Endothelial cell of umbilical vein (primary cell): ENCODE measurements at regions of chr3 and their contacts with region 1.

Region 1: GRCh38 chr3:58008140-58009025 is at the start of gene FLNB:
- DNase-seq: peak; percentile 77
- H3K4me3 ChIP-seq: peak within 1 kb of the TSS; percentile 71 to 93 (median 78)
- H3K27ac ChIP-seq: peak within 1 kb of the TSS; percentile 38
- H3K4me1 ChIP-seq: peaks cover 31% of the 10 kb centered on the region
- H3K27me3 ChIP-seq: no peaks in the 10 kb centered on the region
- CTCF ChIP-seq: peak; percentile 54 to 81
- POLR2A ChIP-seq: peak; percentile 98
- total RNA-seq, gene FLNB: 595 and 670 TPM in 2 replicates

Region 2: DNA sequence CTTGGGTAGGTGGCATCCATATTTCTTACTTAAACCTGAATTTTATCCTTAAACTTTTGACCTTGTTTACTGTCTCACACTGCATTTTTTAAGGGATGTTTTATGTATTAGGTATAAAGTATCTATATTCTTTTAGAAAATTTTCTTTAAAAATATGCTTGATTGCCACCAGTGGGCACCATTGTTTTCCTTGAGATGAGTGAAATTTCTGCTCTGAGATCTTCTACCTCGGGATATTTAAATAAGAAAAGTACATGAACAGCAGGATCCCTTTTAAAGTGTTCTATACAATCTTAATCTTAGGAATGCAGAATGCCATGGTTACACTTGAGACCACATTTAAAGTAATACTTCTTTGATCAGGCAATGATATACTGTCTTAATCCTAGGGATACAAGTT is 143.5 kb before region 1 on chr3:
- CTCF ChIA-PET with region 1: no interaction called
- POLR2A ChIA-PET with region 1: no interaction called
- dilution Hi-C with region 1: no loop called
- intact Hi-C with region 1: loop called (anchors 5 kb)
- DNase-seq: peak; percentile 47
- H3K4me3 ChIP-seq: no peak overlapping the region
- H3K27ac ChIP-seq: no peak overlapping the region
- H3K4me1 ChIP-seq: no peaks in the 10 kb centered on the region
- H3K27me3 ChIP-seq: no peaks in the 10 kb centered on the region
- CTCF ChIP-seq: peak; percentile 16 to 22
- POLR2A ChIP-seq: no peak

Region 3: DNA sequence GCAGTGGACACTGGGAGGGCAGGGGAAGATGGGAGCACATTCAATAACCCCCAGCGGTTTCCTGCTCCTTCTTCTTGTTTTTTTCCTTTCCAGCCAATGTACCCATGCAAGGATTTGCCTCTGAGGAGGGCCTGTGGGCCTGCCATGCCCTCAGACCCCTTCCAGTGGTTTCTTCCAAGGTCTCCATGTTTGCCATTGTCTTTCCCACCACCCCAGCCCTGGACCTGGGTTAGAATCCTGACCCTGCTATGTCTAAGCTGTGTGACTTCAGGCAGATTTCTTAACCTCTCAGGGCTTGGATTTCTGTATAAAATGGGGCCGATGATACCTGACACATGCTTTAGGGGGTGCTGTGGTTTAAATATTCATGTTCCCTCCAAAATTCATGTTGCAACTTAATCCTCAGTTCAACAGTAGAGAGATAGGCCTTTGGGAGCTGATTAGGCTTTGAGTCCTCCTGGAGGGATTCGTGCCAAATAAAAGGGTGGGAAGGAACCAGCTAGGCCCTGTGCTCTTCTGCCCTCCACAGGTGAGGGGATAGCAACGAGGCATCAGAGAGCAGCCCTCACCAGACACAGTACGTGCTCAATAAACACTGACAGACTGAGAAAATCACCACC is 46.4 kb before region 1 on chr3:
- CTCF ChIA-PET with region 1: interaction called, 21 read pairs
- POLR2A ChIA-PET with region 1: no interaction called
- dilution Hi-C with region 1: no loop called
- intact Hi-C with region 1: no loop called
- DNase-seq: peak; percentile 58
- H3K4me3 ChIP-seq: no peak overlapping the region
- H3K27ac ChIP-seq: no peak overlapping the region
- H3K4me1 ChIP-seq: peaks cover 17% of the 10 kb centered on the region
- H3K27me3 ChIP-seq: no peaks in the 10 kb centered on the region
- CTCF ChIP-seq: peak; percentile 30 to 65
- POLR2A ChIP-seq: no peak

Region 4: GRCh38 chr3:58034738-58035523 is 26.5 kb after region 1 on chr3:
- CTCF ChIA-PET with region 1: no interaction called
- POLR2A ChIA-PET with region 1: no interaction called
- dilution Hi-C with region 1: no loop called
- intact Hi-C with region 1: no loop called
- DNase-seq: no peak
- H3K4me3 ChIP-seq: no peak overlapping the region
- H3K27ac ChIP-seq: no peak overlapping the region
- H3K4me1 ChIP-seq: peaks cover 13% of the 10 kb centered on the region
- H3K27me3 ChIP-seq: no peaks in the 10 kb centered on the region
- CTCF ChIP-seq: no peak
- POLR2A ChIP-seq: no peak

Region 5: DNA sequence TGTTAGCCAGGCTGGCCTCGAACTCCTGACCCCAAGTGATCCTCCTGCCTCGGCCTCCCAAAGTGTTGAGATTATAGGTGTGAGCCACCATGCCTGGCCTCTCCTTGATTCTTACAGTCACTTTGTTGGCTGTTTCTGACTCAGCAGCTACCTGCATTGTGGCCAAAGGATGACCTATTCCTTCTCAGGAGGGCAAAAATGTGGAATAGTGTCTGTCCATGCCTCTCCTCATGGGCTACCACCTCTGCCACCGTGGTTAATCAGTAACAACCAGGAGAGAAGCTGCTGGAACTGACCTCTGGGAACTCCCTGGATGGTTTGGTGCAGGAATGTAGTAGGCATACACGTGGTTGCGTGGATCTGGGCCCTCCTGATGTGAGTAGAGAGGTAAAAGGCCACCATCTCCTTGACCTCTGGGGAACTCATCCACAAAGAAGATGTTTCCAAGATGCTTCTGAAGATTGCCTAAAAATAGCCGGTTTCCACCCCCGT is 63.1 kb after region 1 on chr3:
- CTCF ChIA-PET with region 1: no interaction called
- POLR2A ChIA-PET with region 1: no interaction called
- dilution Hi-C with region 1: no loop called
- intact Hi-C with region 1: no loop called
- DNase-seq: no peak
- H3K4me3 ChIP-seq: no peak overlapping the region
- H3K27ac ChIP-seq: no peak overlapping the region
- H3K4me1 ChIP-seq: peaks cover 31% of the 10 kb centered on the region
- H3K27me3 ChIP-seq: no peaks in the 10 kb centered on the region
- CTCF ChIP-seq: no peak
- POLR2A ChIP-seq: no peak

Region 6: GRCh38 chr3:58082047-58082446 is 73.7 kb after region 1 on chr3:
- CTCF ChIA-PET with region 1: interaction called, 13 read pairs
- POLR2A ChIA-PET with region 1: interaction called, 8 read pairs
- dilution Hi-C with region 1: no loop called
- intact Hi-C with region 1: loop called (anchors 1 kb)
- DNase-seq: peak; percentile 99
- H3K4me3 ChIP-seq: no peak overlapping the region
- H3K27ac ChIP-seq: peak overlapping the region; percentile 93
- H3K4me1 ChIP-seq: peaks cover 62% of the 10 kb centered on the region
- H3K27me3 ChIP-seq: no peaks in the 10 kb centered on the region
- CTCF ChIP-seq: no peak
- POLR2A ChIP-seq: peak; percentile 47

Region 7: DNA sequence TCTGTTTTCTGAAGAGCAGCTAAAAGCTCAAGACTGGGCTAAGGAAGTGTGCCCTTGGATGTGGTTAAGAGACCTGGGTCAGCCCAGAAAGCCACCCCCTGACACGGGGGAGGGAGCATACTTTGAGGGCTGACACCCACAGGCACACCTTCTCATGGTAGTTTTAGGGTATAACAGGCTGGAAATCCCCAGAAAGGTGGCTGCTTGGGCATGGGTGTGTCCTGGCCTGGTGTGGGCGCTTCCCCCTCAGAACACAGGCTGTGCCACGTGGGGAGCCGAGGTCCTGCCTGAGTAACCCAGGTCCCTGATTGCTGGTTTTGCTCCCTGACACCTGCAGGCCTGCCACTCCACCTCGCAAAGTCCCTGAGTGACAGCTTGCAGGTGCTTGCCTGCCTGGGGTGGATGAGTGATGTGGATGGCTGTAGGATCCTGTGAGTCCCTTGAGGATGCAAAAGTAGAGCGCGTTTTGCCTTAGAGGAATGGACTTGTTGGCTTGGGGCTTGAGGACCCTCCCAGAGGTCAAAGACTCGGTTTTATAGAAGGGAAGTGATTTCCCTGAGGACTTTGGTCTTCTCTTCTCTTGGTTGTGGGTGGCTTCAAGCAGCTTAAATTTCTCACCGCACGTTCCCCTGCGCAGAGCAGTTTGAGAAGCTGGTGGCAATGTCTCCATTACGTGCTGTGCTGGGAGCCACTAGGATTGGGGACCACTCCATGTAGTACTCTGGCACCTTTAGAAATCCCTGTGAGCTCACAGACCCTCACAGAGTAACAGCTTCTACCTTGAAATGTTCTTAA is 108.0 kb after region 1 on chr3:
- CTCF ChIA-PET with region 1: interaction called, 7 read pairs
- POLR2A ChIA-PET with region 1: no interaction called
- dilution Hi-C with region 1: no loop called
- intact Hi-C with region 1: loop called (anchors 1 kb)
- DNase-seq: peak; percentile 31
- H3K4me3 ChIP-seq: no peak overlapping the region
- H3K27ac ChIP-seq: peak overlapping the region; percentile 83
- H3K4me1 ChIP-seq: peaks cover 67% of the 10 kb centered on the region
- H3K27me3 ChIP-seq: no peaks in the 10 kb centered on the region
- CTCF ChIP-seq: no peak
- POLR2A ChIP-seq: no peak

Region 8: DNA sequence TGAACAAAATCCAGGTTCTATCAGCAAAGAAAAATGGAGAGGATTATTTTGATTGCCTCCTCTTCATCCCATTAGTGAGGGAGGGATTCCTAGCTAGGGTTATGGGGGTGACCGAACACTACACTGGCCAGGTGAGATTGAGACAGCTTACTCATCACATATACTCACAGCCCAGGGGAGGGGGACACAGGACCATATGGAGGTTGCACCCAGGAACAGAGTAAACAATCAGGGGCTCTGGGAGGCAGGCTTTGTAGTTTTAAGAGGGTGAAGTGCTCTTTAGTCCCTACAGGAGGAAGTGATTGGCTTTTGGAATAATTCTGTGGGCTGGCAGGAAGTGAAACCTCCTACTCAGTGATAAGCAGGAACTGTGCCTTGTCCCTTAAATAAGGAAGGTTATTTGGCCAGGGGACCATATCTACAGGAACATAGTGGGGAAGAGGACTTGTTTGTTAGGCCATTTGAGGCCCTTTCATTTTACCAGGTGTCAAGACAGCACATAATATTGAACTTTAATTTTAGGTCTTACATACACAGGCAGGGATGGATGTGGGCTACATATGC is 466.0 kb after region 1 on chr3:
- CTCF ChIA-PET with region 1: no interaction called
- POLR2A ChIA-PET with region 1: no interaction called
- dilution Hi-C with region 1: no loop called
- intact Hi-C with region 1: no loop called
- DNase-seq: no peak
- H3K4me3 ChIP-seq: no peak overlapping the region
- H3K27ac ChIP-seq: no peak overlapping the region
- H3K4me1 ChIP-seq: peaks cover 3% of the 10 kb centered on the region
- H3K27me3 ChIP-seq: peaks cover 0 to 4% of the 10 kb centered on the region in 2 experiments
- CTCF ChIP-seq: no peak
- POLR2A ChIP-seq: no peak